ENCODE measurements at regions of chr15 and their contacts with region 1.

Region 1: DNA sequence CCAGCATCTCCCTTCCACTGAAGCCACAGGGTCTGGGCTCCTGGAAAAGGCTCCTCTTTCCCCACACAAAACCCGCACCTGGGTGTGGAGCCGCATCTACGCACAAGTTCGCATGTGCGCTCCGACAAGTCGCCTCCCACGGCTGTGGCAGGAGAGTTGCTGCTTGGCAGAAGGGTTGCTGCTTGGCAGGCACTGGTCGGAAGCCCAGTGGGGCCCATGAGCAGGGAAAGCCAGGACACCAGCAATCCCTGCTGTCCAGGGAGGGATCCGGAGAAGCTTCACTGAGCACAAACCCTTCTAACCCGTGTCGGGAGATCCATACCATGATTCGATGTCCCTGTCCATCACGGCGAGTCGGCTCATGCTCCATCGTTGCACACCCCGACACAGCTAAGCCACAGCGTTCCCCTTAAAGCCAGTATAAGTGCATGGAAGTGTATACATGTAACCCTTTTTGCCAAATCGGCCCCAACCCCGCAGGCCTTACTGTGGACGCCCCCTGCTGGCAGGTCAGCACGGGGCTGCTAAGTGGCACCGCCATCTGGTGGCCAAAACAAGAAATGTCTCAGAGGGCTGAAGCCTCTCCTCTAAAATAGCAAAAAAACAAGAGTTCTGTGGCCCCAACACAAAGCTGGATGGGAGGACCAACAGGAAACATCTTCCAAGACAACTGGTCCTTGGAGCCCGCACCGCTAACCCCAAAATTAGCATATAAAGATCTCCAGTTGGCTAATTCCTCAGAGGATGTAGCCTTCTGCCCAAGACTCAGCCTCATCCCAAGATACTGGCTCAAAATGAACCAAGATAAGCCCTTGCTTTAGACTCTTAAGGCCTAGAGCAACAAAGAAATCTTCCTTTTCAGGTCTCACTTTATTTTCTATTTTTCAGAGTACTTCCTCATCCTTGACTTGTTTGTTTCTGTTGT is 8.3 kb downstream of the ANKRD63 start:
- DNase-seq: peak; percentile 86
- CTCF ChIP-seq: peak; percentile 100

Region 2: DNA sequence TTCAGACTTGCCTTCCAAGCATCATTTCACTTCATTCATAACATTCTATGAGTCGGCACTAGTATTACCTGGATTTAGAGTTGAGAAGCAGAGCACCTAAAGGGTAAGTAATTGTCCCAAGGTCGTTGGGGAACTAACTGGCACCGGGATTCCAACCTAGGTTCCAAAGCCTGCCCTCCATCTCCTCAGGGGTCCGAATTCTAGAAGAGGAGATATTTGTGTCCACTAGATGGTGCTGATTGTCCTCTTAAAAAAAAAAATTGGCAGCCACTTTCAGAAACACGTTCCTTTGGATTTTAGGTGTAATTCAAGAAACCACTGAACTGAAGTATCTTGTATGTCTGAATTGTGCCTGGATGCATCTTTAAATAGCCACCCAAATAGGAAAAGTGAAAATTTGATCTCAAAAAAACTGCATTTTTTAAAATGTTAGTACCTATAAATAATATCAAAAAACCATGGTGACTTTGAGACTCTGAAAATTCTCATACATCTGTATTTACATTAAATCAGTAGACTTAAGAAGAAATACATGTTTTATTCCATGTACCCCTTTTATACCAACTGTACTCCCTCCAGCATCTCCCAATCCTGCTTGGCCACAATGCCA is 488.1 kb before region 1 on chr15:
- CTCF ChIA-PET with region 1: interaction called, 17 read pairs
- POLR2A ChIA-PET with region 1: no interaction called
- DNase-seq: peak; percentile 47
- CTCF ChIP-seq: peak; percentile 54

Region 3: DNA sequence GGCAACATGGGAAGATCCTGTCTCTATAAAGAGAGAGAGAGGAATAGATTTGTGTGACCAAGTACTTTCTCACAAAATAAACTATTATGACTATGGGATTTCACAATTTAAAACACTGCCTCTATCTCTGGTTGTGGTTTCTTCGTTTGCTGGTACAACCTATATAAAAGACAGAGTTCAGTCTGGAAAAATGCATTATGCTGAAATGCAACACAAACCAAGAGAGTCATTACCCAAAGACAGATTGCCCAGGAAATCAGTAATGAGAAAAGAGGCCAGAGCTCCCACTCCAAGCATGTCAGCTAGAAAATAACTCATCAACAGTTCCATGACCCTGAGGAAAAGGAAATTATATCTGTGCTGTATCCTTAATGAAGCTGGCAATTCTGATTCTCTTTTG is 377.8 kb before region 1 on chr15:
- CTCF ChIA-PET with region 1: no interaction called
- POLR2A ChIA-PET with region 1: no interaction called
- DNase-seq: no peak
- CTCF ChIP-seq: no peak

Region 4: GRCh38 chr15:40044717-40045571 is 229.7 kb before region 1 on chr15:
- CTCF ChIA-PET with region 1: interaction called, 111 read pairs
- POLR2A ChIA-PET with region 1: no interaction called
- DNase-seq: peak; percentile 88
- CTCF ChIP-seq: peak; percentile 99

Region 5: GRCh38 chr15:40121911-40122638 is 152.5 kb before region 1 on chr15:
- CTCF ChIA-PET with region 1: no interaction called
- POLR2A ChIA-PET with region 1: no interaction called
- DNase-seq: no peak
- CTCF ChIP-seq: no peak

Region 6: DNA sequence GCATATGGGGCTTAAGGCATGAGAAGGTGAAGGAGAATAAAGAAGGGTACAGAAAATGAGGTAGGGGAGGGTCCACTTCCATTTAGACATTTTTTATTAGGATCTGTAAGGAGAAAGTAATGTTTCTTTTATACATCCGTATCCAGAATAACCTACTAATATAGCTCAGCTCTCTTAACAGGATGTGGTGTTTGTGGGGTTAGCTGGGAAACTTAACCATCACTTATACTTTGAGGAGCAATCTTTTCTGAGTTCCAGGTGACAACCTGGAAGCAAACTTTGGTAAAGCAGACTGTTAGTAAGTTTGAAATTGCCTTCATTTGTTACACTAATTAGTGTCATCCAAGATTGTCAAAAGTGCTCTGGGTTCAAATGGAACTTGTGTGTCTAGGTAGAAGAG is 77.2 kb before region 1 on chr15:
- CTCF ChIA-PET with region 1: interaction called, 15 read pairs
- POLR2A ChIA-PET with region 1: no interaction called
- DNase-seq: no peak
- CTCF ChIP-seq: no peak

Region 7: GRCh38 chr15:40238532-40239403 is 35.8 kb before region 1 on chr15 and contains the start of gene PAK6:
- CTCF ChIA-PET with region 1: interaction called, 525 read pairs
- POLR2A ChIA-PET with region 1: no interaction called
- DNase-seq: no peak
- CTCF ChIP-seq: no peak

Region 8: DNA sequence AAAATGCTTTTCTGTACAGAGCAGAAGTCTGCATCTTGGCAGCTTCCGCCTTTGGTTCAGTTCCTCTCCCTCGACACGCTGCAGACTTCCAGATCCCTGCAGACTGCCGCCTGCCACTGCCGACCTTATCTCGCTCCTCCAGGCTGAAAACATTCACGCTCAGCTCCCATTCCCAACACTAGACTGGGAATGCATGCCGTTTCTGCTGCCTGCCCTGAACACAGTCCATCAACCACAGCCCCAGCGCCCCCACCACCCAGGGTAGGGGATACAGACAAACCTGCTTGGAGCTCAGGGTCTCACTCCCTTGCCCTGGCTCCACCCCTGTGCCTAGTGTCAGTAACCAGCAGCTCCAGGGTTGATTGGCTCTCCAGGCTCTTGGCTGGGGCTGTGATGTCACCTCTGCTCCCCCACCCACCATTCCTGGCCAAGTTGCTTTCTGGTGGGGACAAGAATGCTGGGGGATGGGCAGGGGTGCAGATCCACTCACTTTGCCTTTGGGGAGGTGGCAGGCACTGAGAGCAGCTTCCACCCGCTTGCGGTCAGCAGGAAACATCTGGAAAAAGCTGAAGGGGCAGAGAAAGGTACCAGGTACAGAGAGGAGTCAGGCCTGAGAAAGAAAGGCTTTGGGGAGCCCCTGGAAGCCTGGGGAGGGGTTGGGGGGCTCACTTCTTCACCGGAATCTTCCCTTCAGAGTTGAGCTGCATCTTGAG is 27.0 kb after region 1 on chr15:
- CTCF ChIA-PET with region 1: interaction called, 405 read pairs
- POLR2A ChIA-PET with region 1: no interaction called
- DNase-seq: no peak
- CTCF ChIP-seq: no peak

Region 9: DNA sequence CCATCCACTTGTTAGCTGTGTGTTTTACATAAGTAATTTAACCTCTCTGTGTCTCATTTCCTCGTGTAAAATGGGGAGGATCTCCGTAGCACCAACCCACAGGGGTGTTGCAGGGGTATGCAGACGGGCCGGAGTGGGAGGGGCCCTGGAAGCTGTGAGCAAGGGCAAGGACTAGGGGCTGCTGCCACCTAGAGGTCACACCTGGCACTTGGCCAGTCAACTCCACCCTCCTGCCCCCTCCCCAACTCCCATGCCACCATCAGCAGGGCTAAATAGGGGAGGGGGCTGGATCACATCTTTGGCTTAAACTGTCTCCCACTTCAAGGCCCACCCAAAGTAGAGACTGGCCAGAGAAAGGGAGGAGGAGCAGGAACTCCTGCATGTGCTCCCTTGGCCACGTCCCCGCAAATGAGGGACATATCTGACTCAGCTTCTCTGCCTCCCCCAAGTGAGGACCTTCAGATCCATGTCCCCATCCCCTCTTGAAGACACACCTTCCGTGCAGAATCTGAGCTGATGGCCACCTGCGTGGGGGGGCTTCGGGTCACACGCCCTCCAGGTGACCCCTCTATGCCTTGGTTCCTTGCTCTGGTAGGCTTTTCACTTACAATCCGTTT is 63.5 kb after region 1 on chr15:
- CTCF ChIA-PET with region 1: interaction called, 263 read pairs
- POLR2A ChIA-PET with region 1: no interaction called
- DNase-seq: peak; percentile 91
- CTCF ChIP-seq: peak; percentile 92

Region 10: GRCh38 chr15:40525855-40526254 is 251.2 kb after region 1 on chr15:
- CTCF ChIA-PET with region 1: no interaction called
- POLR2A ChIA-PET with region 1: no interaction called
- DNase-seq: no peak
- CTCF ChIP-seq: no peak

Region 11: GRCh38 chr15:40550341-40551037 is 275.9 kb after region 1 on chr15:
- CTCF ChIA-PET with region 1: no interaction called
- POLR2A ChIA-PET with region 1: no interaction called
- DNase-seq: peak; percentile 69
- CTCF ChIP-seq: no peak